Common myeloid progenitor, CD34-positive (primary cell): ENCODE measurements at regions of chr11 and their contacts with region 1.

Region 1: GRCh38 chr11:611001-611996 is 4.5 kb downstream of the IRF7 start:
- DNase-seq: no peak
- H3K4me3 ChIP-seq: no peak overlapping the region
- H3K27ac ChIP-seq: no peak overlapping the region
- H3K4me1 ChIP-seq: peaks cover 0 to 21% (median 13%) of the 10 kb centered on the region in 4 experiments
- H3K27me3 ChIP-seq: no peaks in the 10 kb centered on the region

Region 2: DNA sequence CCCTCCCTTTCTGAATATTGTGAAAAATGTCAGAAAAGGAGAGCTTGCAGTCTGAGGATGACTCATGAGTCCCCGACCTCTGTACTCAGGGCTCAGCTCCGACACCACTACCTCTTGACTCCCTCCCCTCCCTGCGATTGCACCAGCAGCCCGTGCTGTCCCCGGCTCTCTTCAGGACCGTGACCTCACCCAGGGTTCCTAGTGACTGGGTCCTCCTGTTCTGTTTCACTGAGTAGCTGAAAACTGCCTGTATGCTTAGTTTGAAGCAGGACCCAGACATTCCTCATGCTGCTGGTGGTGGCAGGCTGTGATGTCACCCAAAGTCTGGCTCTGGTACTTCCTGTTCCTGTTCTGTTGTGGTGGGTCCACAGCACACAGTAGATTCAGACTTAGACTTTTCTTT is 23.3 kb before region 1 on chr11:
- CTCF ChIA-PET with region 1: interaction called, 3 read pairs
- POLR2A ChIA-PET with region 1: interaction called, 10 read pairs
- DNase-seq: peak in 2 of 3 donors; percentile 61 to 72
- H3K4me3 ChIP-seq: no peak overlapping the region
- H3K27ac ChIP-seq: peak overlapping the region in 1 of 2 experiments; percentile 5
- H3K4me1 ChIP-seq: peaks cover 0 to 4% (median 2%) of the 10 kb centered on the region in 4 experiments
- H3K27me3 ChIP-seq: no peaks in the 10 kb centered on the region

Region 3: DNA sequence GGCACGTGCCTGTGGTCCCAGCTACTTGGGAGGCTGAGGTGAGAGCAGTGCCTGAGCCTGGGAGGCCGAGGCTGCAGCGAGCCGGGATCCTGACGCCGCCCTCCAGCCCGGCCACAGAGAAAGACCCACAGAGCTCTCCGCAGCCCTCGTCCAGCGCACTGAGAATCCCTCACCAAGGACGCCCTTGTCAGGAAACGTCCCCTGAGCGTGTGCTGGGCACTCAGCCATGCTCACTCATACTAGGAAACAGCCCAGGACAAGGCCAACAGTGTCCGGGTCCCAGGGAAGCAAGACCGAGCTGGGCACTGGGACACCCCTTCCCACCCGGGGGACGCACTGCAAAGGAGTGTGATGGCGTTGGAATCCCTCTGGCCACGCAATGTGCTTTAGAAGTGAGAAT is 69.2 kb after region 1 on chr11:
- CTCF ChIA-PET with region 1: no interaction called
- POLR2A ChIA-PET with region 1: no interaction called
- DNase-seq: no peak
- H3K4me3 ChIP-seq: no peak overlapping the region
- H3K27ac ChIP-seq: no peak overlapping the region
- H3K4me1 ChIP-seq: no peaks in the 10 kb centered on the region
- H3K27me3 ChIP-seq: no peaks in the 10 kb centered on the region

Region 4: DNA sequence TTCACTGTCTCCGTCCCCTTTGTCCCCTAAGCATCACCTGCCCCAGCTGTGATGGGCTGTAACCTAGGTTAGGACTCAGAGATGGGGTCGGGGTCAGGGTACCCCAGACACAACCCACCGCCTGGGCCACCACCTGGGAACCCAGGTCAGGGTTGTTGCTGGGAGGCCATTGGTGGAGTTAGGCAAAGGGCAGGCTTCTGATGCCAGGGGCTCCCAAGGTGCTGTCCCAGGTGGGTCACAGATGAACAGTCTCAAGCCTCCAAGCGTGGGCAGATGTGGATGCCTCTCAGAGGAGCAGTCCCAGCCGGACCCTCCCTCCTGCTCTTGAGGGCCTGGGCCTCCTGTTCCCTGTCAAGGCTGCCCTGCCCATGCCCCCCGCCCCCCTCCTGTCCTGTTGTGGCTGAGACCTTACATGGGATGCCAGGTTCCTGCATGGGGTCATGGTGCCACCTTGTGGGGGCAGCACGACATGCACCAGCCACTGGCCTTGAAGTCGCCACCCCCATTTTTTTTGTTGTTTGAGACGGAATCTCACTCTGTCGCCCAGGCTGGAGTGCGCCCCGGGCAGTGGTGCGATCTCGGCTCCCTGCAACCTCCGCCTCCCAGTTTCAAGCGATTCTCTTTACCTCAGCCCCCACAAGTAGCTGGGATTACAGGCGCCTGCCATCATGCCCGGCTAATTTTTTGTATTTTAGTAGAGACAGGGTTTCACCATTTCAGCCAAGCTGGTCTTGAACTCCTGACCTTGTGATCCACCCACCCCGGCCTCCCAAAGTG is 153.9 kb after region 1 on chr11:
- CTCF ChIA-PET with region 1: no interaction called
- POLR2A ChIA-PET with region 1: no interaction called
- DNase-seq: peak; percentile 83 to 92 (median 87)
- H3K4me3 ChIP-seq: no peak overlapping the region
- H3K27ac ChIP-seq: no peak overlapping the region
- H3K4me1 ChIP-seq: no peaks in the 10 kb centered on the region
- H3K27me3 ChIP-seq: no peaks in the 10 kb centered on the region